ENCODE measurements at regions of chr14 and their contacts with region 1.

Region 1: GRCh38 chr14:21233457-21234076 is 35.7 kb downstream of the HNRNPC start:
- DNase-seq: no peak

Region 2: GRCh38 chr14:21087294-21088091 is 146.1 kb before region 1 on chr14:
- intact Hi-C with region 1: no loop called
- DNase-seq: peak; percentile 76

Region 3: DNA sequence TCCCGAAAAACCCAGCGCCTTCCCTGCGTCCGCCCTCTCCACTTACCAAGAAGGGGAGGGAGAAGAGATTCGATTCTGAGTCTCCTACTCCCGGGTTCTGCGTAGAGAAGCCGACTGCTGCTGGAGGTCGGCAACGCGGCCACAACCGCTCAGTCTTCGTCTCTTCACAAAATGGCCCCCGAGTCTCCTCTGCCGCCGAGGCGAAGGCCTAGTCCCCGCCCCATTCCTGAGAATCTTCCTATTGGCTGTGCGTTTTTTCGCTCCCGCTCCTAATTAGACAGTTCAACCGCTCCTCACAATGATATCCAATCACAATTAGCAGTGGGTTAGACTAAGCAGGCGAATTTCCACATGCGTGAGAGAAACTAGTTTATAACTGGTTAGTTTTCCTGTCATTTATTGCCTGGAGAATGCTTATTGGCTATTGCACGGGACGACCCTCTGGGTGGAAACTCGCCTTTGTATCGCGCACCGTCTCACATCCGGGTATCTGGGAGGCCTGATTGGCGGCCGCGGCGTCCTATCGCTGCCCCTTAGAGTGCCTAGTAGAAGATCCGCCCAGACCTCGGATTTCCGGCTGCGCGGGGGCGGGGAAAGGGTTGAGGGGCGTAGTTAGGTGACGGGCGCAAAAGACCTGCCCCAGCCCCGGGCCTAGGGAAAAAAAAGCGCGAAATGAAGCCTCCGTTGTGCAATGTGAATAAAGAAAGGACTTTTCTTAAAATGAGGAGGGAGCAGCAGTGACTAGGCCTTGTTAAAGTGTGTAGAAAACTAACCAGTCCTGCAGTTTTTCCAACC is 35.9 kb after region 1 on chr14 and contains the start of gene HNRNPC:
- intact Hi-C with region 1: loop called (anchors 5 kb)
- DNase-seq: peak; percentile 100
- total RNA-seq, gene HNRNPC: 260 TPM

Region 4: GRCh38 chr14:21367582-21368144 is 134.1 kb after region 1 on chr14:
- intact Hi-C with region 1: no loop called
- DNase-seq: no peak

Region 5: DNA sequence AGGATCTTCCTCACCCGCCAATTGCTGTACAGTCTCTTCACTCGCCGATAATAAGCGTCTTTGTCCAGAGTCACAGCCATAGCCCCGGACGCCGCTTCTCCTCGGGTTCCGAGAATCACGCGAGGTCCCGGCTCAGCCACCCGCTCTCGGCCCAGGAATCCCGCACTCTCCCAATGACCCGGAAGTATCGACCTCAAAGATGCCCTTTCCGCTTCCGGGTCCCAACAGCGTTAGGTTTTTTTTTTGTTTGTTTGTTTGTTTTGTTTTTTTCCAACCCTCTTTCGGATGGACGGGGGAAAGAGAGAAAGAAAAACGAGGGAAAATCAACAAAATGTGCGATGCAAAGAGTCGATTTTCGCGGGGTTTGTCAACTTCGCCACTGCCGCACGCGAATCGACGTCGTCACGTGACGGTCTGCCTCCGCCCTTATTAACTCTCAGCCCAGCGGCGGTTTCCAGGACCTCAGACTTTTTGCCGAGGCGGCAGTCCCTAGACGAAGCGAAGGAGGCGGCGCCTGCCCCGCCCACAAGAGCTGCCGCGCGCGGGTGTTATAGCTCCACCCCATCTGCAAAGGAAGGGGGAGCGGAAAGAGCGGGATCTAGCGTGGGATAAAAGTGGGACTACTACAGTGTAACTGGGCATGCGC is 150.4 kb after region 1 on chr14 and contains the start of gene SUPT16H:
- intact Hi-C with region 1: loop called (anchors 5 kb)
- DNase-seq: peak; percentile 98
- total RNA-seq, gene SUPT16H: 31.7 TPM